HepG2 (cell line): ENCODE measurements at regions of chr9 and their contacts with region 1.

Region 1: GRCh38 chr9:89549031-89549644 is 51.2 kb upstream of the SEMA4D start:
- DNase-seq: peak; percentile 32
- ATAC-seq: peak; percentile 85
- H3K4me3 ChIP-seq: no peak overlapping the region
- H3K27ac ChIP-seq: no peak overlapping the region
- H3K4me1 ChIP-seq: peaks cover 65% of the 10 kb centered on the region
- H3K27me3 ChIP-seq: peaks cover 1 to 8% of the 10 kb centered on the region in 2 experiments; a peak in 1 of 5 replicates
- CTCF ChIP-seq: peak; percentile 82
- EP300 ChIP-seq: no peak
- POLR2A ChIP-seq: no peak
- RAD21 ChIP-seq: peak; percentile 48

Region 2: DNA sequence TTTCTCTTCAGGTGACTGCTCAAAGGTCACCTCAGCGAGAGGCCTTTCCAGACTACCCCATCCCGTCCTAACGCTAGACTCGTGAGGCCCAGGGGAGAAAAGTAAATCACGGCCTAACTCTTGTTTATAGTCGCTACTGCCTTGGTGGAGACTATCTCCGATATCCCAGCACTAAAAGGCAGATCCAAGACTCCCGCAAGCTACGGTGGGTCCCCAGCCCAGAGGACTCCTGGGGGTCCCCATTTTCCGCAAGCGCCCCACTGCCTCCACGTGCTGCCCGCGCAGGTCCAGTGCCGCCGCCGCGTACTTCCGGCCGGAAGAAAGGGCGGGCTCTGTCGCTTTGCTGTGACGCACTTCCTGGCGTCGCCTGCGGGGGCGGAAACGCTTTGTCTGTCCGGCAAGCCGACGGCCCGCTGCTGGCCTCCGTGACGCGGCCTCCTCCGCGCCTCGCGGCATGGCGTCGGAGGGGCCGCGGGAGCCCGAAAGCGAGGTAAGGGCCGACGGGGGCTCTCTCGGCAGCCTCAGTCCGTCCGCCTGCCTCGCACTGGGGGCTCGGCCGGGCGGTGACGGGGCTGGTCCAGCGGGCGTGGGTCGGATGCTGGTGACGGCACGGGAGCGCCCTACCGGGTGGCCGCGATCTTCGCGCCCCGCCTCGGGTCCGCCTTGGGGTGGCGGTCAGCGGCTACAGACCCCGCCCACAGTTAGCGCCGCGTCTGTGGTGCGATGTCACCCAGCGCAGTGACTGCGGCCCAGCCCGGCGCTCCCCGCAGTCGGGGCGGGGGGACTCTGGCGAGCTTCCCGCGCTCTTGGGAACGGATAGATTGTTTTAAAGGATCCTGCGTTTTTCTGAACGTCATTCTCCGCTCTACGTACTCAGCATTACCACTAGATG is 230.8 kb before region 1 on chr9 and contains the start of gene SECISBP2:
- CTCF ChIA-PET with region 1: interaction called, 13 read pairs
- POLR2A ChIA-PET with region 1: interaction called, 3 read pairs
- in situ Hi-C with region 1: loop called (anchors 10 kb)
- intact Hi-C with region 1: loop called (anchors 1 kb)
- DNase-seq: peak; percentile 93
- ATAC-seq: peak; percentile 95
- H3K4me3 ChIP-seq: peak within 1 kb of the TSS; percentile 71 to 81 (median 71)
- H3K27ac ChIP-seq: peak within 1 kb of the TSS; percentile 98
- H3K4me1 ChIP-seq: peaks cover 78% of the 10 kb centered on the region
- H3K27me3 ChIP-seq: no peaks in the 10 kb centered on the region
- CTCF ChIP-seq: peak; percentile 78
- EP300 ChIP-seq: peak in 1 of 2 experiments; percentile 31; a peak in 2 of 4 replicates
- POLR2A ChIP-seq: peak; percentile 77 to 94
- RAD21 ChIP-seq: peak; percentile 47
- total RNA-seq, gene SECISBP2: 32.4 and 32.9 TPM in 2 replicates